ENCODE measurements at regions of chr4 and their contacts with region 1.

Region 1: DNA sequence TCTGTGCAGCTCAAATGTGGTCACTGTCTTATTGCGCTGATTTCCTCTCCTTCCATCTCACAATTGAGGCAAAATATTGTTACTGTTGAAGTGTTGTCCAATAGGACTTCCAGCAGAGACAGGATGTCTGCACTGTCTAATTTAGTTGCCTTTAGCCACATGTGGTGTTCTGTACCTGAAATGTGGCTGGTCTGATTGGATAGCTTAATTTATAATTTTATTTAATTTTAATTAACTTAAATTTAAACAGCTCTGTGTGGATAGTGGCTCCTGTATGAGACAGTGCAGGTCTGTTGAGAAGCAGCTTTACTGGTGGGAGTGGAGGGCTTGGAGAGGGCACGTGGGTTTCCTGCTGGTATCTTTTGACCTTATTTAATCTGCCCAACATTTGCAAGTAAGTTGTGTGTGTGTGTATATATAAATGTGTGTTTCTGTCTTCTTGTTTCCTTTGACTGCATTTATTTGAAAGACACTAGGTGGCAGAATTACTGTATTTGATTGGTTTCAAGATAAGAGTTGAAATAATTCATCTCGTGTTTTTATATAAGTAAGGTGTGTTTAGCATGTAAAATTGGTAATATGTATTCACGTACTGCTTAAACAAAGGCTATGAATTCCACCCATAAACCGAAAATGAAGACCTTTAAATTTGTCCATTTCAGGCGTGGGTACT is 55.3 kb upstream of the MSANTD1 start:
- DNase-seq: peak in 2 of 5 donors; percentile 31 to 36
- H3K4me3 ChIP-seq: no peak overlapping the region
- H3K4me3 Mint-ChIP-seq: peak overlapping the region in 4 of 7 donors; percentile 3 to 32 (median 8)
- H3K27ac ChIP-seq: no peak overlapping the region
- H3K27ac Mint-ChIP-seq: peak overlapping the region in 7 of 8 donors; percentile 24 to 92 (median 67)
- H3K4me1 ChIP-seq: peaks cover 60% of the 10 kb centered on the region
- H3K4me1 Mint-ChIP-seq: peaks cover 71 to 84% (median 81%) of the 10 kb centered on the region in 3 donors
- H3K27me3 ChIP-seq: no peaks in the 10 kb centered on the region
- H3K27me3 Mint-ChIP-seq: no peaks in the 10 kb centered on the region

Region 2: GRCh38 chr4:3183008-3183407 is 10.7 kb before region 1 on chr4:
- CTCF ChIA-PET with region 1: interaction called, 10 read pairs
- POLR2A ChIA-PET with region 1: no interaction called
- DNase-seq: no peak
- H3K4me3 ChIP-seq: no peak overlapping the region
- H3K4me3 Mint-ChIP-seq: no peak overlapping the region
- H3K27ac ChIP-seq: no peak overlapping the region
- H3K27ac Mint-ChIP-seq: no peak overlapping the region
- H3K4me1 ChIP-seq: no peaks in the 10 kb centered on the region
- H3K4me1 Mint-ChIP-seq: peaks cover 0 to 2% (median 0%) of the 10 kb centered on the region in 3 donors
- H3K27me3 ChIP-seq: no peaks in the 10 kb centered on the region
- H3K27me3 Mint-ChIP-seq: no peaks in the 10 kb centered on the region

Region 3: DNA sequence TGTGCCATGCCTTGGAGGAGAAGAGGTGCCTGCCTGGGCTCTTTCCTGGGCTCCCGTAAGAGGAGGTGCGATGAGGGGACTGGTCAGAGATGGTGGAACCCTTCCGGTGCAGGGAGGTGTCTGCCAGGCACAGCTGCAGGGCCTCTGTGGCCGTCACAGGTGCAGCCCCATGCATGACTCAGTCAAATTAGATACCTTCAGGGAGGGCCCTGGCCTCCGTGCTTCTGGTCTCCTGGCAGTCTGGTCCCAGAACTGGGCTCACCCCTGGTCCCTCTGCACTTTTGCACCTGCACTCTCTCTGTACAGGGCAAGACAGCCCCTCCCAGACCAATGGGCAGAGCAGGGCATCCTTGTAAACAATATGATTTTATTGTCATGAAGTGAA is 388.4 kb after region 1 on chr4:
- CTCF ChIA-PET with region 1: no interaction called
- POLR2A ChIA-PET with region 1: no interaction called
- DNase-seq: no peak
- H3K4me3 ChIP-seq: no peak overlapping the region
- H3K4me3 Mint-ChIP-seq: no peak overlapping the region
- H3K27ac ChIP-seq: no peak overlapping the region
- H3K27ac Mint-ChIP-seq: no peak overlapping the region
- H3K4me1 ChIP-seq: no peaks in the 10 kb centered on the region
- H3K4me1 Mint-ChIP-seq: no peaks in the 10 kb centered on the region
- H3K27me3 ChIP-seq: no peaks in the 10 kb centered on the region
- H3K27me3 Mint-ChIP-seq: peaks cover 3 to 10% of the 10 kb centered on the region in 2 donors

Measured in CD8-positive, alpha-beta memory T cell (primary cell).